Psoas muscle (tissue), 8 donors: ENCODE measurements at regions of chr11 and their contacts with region 1.

Region 1: DNA sequence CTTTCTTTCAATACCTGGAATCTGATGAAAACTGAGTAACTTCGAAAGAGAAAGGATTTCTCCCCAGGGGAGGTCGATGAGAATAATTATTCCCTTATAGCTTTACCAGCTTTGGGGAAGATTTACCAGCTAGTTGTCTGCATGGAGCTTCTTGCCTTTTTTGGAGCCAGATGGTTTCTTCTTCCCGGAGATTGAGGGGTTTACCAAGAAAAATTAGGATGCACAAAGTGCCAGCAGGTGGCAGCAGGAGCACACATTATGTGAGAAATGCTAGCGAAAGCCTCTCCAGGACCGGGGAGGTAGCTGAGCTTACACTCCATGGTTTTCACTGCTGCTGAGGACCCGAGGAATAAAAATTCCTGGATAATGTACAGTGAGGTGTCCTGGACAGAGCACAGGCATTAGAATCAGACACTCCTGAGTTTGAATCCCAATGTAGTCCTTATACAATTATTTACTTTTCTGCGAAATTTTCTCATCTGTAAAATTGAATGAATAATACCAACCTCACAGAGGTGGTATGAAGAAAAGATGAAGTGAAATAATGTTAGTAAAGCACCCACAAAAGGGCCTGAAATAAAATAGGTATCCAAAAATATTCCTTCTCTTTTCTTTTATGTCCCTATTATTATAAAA is 46.0 kb upstream of the PARVA start:
- DNase-seq: peak; percentile 79 to 89
- ATAC-seq: peak; percentile 80 to 93 (median 84)
- H3K4me3 ChIP-seq: no peak overlapping the region
- H3K27ac ChIP-seq: no peak overlapping the region
- H3K4me1 ChIP-seq: no peaks in the 10 kb centered on the region
- H3K27me3 ChIP-seq: no peaks in the 10 kb centered on the region
- CTCF ChIP-seq: peak; percentile 82

Region 2: DNA sequence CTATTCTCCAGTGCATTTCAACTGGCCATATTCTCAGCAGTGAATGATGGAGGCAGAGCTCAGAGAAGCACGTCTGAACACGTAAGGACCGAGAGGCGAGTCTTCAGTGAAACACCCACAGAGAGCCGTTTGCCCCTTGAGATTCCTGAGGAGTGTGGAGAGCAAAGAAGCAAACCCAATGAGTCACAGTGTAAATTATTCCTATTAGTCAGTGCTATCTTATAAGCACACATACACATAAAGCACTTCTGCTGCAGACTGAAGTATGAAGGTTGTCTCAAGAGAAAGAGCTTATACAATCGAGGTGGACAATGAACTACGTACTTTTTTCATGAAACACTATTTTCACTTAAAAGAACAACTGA is 746.9 kb before region 1 on chr11:
- intact Hi-C with region 1: no loop called
- DNase-seq: no peak
- ATAC-seq: peak; percentile 39 to 65 (median 55)
- H3K4me3 ChIP-seq: no peak overlapping the region
- H3K27ac ChIP-seq: no peak overlapping the region
- H3K4me1 ChIP-seq: peaks cover 18% of the 10 kb centered on the region
- H3K27me3 ChIP-seq: no peaks in the 10 kb centered on the region
- CTCF ChIP-seq: no peak

Region 3: DNA sequence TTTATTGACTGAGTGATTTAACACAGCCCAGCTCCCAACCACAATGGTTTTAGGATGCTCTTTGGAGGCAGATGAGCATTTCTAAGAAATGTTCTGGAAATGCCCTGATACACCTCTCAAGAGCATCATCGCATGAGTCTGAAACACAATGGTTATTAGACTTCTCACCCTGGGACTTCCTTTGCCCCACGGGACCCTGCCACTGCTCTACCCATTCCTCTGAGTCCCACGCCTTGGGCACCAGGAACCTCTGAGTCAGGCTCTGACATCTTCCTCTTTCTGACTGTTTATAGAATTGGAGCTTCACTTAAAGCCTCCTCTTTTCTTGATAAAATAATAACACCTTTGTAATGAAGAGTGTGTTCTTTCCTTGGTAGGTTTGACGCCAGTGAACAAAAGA is 39.6 kb before region 1 on chr11:
- intact Hi-C with region 1: no loop called
- DNase-seq: no peak
- ATAC-seq: no peak
- H3K4me3 ChIP-seq: no peak overlapping the region
- H3K27ac ChIP-seq: no peak overlapping the region
- H3K4me1 ChIP-seq: peaks cover 10% of the 10 kb centered on the region
- H3K27me3 ChIP-seq: no peaks in the 10 kb centered on the region
- CTCF ChIP-seq: no peak

Region 4: DNA sequence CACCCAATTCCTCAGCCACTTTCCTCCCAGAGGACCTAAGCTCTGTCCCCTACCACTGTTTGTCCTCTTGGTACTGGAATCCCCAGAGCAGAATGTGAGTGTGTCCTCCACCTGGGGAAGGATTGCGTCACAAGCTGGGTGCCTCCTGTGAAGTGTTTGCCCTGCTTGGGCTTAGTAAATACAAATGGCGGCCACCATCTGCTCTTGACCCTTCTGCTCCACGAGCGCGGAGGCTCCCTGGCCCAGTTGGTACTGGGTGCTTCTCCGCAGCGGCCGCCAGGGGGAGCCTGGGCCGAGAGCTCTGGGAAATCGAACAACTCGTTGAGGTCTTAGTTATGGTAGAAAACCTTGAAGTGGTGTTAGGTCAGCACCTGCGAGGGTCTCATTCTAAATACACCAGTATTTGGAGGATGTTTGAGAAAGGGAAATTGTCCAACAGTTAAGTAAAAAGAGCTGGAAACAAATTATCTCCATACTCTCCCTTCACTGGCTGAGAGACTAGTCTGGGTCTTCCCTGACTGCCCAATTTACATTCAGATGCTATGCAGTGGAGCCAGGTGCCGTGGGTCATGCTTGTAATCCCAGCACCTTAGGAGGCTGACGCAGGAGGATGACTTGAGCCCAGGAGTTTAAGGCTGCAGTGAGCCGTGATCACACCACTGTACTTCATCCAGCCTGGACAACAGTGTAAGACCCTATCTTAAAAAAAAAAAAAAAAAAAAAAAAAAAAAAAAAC is 268.2 kb after region 1 on chr11:
- intact Hi-C with region 1: loop called in 1 of 2 experiments (anchors 10 kb)
- DNase-seq: peak; percentile 47 to 77
- ATAC-seq: peak; percentile 81 to 96 (median 86)
- H3K4me3 ChIP-seq: no peak overlapping the region
- H3K27ac ChIP-seq: no peak overlapping the region
- H3K4me1 ChIP-seq: no peaks in the 10 kb centered on the region
- H3K27me3 ChIP-seq: no peaks in the 10 kb centered on the region
- CTCF ChIP-seq: peak; percentile 81